ENCODE measurements at regions of chr11 and their contacts with region 1.

Region 1: DNA sequence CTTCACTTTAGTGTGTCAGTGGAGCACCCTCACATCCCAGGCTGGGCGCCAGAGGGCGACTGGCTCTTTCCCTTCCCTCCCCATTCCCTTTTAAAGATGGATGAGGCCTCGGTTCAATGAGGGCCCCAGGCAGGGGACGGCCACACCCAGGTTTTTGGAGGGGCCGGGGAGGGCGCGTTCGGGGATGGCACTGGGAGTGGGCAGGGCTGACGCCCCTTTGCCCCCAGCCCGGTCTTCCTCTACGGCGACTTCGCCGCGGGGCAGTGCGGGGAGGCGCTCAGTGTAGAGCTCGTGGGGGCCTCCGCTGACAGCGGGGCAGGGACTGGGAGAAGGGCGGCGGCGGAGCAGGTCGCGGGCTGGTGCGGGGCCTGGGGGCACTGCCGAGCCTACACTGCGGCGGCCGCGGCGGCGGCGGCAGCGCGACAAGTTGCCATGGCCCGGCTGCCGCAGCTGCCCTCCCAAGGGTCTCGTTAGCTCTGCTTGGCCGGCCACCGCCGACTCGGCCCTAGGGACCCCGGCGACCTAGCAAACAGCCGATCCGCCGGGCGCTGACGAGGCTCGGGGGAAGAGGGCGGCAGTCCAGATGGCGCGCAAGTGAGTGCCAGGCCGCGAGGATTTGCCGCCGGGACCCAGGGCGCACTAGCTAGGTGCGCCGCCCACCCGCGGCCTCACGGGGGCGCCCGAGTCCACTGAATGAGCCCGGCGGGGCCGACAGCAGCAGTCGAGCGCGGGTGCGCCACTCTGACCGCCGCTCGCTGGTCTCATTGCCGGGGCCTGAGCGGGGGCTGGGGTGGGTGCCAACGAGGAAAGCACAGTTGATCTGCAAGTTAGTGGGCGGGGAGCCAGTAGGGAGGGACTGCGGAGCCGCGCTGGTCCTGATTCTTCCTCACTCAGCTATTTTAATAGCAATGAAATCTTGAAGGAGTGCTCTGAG is 92.7 kb downstream of the RRM1 start:
- DNase-seq: peak; percentile 96
- ATAC-seq: peak; percentile 93

Region 2: GRCh38 chr11:4493480-4493818 is 306.1 kb after region 1 on chr11:
- intact Hi-C with region 1: loop called (anchors 2 kb)
- DNase-seq: no peak
- ATAC-seq: no peak

Region 3: GRCh38 chr11:4543561-4543960 is 356.2 kb after region 1 on chr11:
- intact Hi-C with region 1: loop called (anchors 2 kb)
- DNase-seq: no peak
- ATAC-seq: no peak

Region 4: DNA sequence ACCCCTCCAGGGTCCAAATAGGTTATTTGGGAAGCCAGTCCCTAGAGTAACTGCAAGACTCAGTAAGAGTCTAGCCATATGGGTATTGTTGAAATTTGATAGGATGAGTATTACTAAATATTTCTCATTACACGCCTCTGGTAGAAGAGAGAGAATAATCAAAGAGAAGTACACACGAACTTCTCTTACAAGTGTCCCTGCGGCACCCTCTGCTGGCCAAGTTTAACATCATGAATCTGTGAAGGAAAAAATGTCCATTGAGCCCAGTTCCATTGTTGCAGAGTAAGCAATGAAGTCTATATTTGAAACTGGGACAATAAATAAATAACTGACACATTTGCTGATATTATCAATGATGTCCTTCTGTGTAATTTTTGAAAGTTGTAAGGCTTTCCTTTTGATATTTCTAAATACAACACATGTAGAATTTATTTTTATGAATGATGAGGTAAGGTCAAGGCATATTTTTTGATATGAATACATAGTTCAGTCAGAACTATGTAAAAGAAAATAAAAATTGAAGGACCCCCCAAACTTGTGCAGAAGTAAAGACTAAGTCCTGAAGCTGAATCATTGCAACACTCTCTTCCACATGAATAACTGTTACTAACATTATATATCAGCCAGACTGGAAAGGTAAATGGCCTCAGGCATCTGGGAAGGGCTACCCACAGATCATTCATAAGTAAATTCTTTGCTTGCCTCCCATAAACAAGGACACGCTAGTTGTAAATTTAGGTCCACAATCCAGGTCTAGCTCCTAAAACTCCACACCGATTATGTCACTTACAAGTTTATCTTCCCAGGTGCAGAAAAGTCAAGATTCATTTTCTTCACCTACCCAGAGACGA is 817.3 kb after region 1 on chr11:
- intact Hi-C with region 1: loop called (anchors 10 kb)
- DNase-seq: peak; percentile 48
- ATAC-seq: peak; percentile 58

Measured in Right ventricle myocardium superior (tissue), 1 donor.